Ascending aorta (tissue), 2 donors: ENCODE measurements at regions of chr16 and their contacts with region 1.

Region 1: DNA sequence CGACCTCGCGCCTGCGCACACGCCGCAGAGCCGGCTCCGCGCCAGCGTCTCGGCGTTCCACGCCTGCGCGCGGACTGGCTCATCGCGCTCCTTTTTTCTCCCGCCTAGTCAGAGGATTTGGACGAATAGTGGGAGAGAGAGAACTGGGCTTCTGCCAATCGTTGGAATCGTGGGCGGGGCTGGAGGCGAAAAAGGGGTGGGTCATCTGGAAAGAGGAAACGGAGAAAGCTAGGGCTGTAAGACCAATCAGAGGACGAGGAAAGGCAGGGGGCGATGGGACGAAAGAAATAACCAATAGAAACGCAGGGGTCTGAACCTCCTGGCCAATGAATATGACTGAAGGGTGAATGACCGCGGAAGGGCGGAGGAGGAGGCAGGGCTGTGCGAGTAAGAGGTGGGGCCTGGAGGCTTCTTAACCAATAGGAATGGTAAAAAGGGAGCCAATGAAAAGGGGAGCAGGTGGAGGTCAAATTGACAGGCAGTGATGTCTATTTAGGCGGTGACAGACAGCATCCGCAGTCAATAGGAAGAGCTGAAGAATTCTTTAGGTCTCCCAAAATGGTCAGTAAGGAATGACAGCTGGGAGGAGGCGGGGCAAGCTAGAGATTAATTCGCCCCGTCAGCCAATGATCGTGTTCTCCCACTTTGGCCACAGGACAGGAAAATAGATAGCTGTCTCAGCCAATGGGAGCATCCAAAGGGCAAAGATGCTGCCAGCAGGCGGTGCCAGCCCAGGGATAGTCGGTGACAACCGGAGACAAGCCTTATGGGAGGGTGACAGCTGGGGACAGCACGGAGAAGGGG is at the start of gene TBC1D10B:
- DNase-seq: peak; percentile 99 to 100
- H3K4me3 ChIP-seq: peak within 1 kb of the TSS; percentile 78 to 82
- H3K27ac ChIP-seq: peak within 1 kb of the TSS; percentile 85 to 88
- H3K4me1 ChIP-seq: peaks cover 13 to 26% of the 10 kb centered on the region in 2 donors
- H3K27me3 ChIP-seq: no peaks in the 10 kb centered on the region
- CTCF ChIP-seq: no peak
- total RNA-seq, gene TBC1D10B: 20.9 TPM

Region 2: DNA sequence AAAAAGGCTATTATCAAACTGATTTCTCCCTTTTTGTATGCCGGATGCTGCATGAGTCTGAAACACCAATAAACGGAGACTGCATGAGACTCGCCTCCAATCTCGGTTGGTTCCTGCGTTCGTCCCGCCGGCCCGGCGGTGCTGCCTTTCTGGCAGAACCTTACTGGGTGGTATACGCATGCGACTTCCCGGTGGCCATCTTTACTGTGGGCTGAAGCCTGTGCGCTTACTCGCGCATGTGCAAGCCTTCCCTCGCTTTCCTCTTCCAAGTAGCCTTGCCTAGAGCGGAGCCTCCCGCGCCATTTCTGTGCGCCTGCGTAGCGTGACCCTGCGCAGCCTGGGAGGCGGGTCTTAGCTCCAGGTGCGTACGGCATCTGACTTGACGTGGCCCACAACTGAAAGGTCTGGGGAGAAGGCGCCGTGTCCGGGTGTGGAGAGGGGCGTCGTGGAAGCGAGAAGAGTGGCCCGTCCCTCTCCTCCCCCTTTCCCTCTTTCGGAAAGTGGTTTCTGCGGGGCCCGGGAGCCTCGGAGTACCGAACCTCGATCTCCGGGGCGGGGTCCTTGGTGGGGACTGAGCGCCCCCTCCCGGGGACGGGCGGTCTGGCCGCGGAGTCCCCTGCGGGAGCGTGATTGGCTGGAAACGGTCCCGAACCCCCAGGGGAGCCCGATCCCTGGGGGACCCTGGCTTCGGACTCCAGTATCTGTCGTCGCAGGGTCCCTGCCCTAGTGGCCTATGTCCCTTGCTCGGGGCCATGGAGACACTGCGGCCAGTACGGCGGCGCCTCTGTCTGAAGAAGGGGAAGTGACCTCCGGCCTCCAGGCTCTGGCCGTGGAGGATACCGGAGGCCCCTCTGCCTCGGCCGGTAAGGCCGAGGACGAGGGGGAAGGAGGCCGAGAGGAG is 554.6 kb before region 1 on chr16 and contains the start of gene PAGR1:
- intact Hi-C with region 1: loop called (anchors 10 kb)
- DNase-seq: peak; percentile 96 to 100
- H3K4me3 ChIP-seq: peak within 1 kb of the TSS; percentile 62 to 70
- H3K27ac ChIP-seq: peak within 1 kb of the TSS; percentile 88 to 94
- H3K4me1 ChIP-seq: peaks cover 0 to 39% of the 10 kb centered on the region in 2 donors
- H3K27me3 ChIP-seq: no peaks in the 10 kb centered on the region
- CTCF ChIP-seq: peak; percentile 82 to 91 (median 90)
- total RNA-seq, gene PAGR1: 54.3 TPM

Region 3: GRCh38 chr16:30091474-30092372 is 278.9 kb before region 1 on chr16 and contains the start of gene TBX6:
- intact Hi-C with region 1: loop called (anchors 10 kb)
- DNase-seq: peak; percentile 65 to 95
- H3K4me3 ChIP-seq: peak within 1 kb of the TSS; percentile 53 to 72
- H3K27ac ChIP-seq: peak within 1 kb of the TSS; percentile 74 to 84
- H3K4me1 ChIP-seq: peaks cover 22 to 27% of the 10 kb centered on the region in 2 donors
- H3K27me3 ChIP-seq: no peaks in the 10 kb centered on the region
- CTCF ChIP-seq: peak; percentile 75 to 96 (median 81)
- total RNA-seq, gene TBX6: 0.75 TPM

Region 4: GRCh38 chr16:30335598-30336474 is 34.8 kb before region 1 on chr16:
- intact Hi-C with region 1: loop called (anchors 1 kb)
- DNase-seq: no peak
- H3K4me3 ChIP-seq: peak overlapping the region; percentile 86 to 87
- H3K27ac ChIP-seq: peak overlapping the region; percentile 96 to 97
- H3K4me1 ChIP-seq: peaks cover 0 to 5% of the 10 kb centered on the region in 2 donors
- H3K27me3 ChIP-seq: no peaks in the 10 kb centered on the region
- CTCF ChIP-seq: no peak

Region 5: DNA sequence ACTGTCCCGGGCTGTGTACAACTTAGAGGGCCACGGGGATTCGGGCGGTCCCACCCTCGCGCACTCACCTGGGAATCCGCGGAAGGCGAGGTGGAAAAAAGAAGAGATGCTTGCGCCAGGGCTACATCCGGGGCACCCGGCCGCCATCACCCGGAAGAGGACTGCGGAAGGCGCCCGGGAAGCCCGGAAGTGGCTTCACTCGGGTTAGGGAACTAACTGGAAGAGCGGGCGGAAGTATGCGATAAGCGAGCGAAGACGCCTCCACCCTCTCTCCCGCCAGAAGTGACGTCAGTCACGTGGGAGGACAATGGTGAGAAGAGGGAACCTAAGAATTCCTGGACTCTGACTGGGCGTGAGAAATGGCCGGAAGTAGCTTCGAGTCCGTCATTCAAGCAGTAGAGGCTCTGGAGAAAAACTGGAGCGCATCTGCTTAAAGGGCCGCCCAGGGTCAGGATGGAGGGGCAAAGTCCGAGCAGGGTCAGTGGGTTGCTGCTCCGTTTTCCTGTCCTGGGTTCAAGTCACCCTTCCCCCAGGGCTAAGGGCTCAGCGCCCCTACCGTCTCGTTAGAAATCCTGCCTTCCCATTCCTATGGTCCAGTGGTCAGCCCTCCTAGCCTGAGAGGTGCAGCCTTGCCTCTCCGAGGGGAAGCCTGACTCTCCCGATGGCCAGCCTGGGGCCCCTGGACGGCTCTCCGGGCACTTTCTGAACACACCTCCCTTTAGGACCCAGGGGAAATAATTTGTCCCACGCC is 15.3 kb before region 1 on chr16 and contains the start of gene CD2BP2:
- intact Hi-C with region 1: loop called (anchors 1 kb)
- DNase-seq: peak; percentile 84 to 99
- H3K4me3 ChIP-seq: peak within 1 kb of the TSS; percentile 72 to 87
- H3K27ac ChIP-seq: peak within 1 kb of the TSS; percentile 95 to 98
- H3K4me1 ChIP-seq: peaks cover 10 to 42% of the 10 kb centered on the region in 2 donors
- H3K27me3 ChIP-seq: no peaks in the 10 kb centered on the region
- CTCF ChIP-seq: peak in 1 of 3 experiments; percentile 5
- total RNA-seq, gene CD2BP2: 15.1 TPM

Region 6: GRCh38 chr16:30407102-30407803 is 36.6 kb after region 1 on chr16 and contains the start of gene ZNF771:
- intact Hi-C with region 1: loop called (anchors 2 kb)
- DNase-seq: peak; percentile 70 to 95
- H3K4me3 ChIP-seq: peak within 1 kb of the TSS; percentile 67 to 82
- H3K27ac ChIP-seq: peak within 1 kb of the TSS; percentile 79 to 94
- H3K4me1 ChIP-seq: peaks cover 8 to 16% of the 10 kb centered on the region in 2 donors
- H3K27me3 ChIP-seq: no peaks in the 10 kb centered on the region
- CTCF ChIP-seq: peak in 1 of 3 experiments; percentile 4
- total RNA-seq, gene ZNF771: 49.6 TPM